Activated B cell treated with CpG ODN at 0.5 μM for 24 hours (primary cell): ENCODE measurements at regions of chr7 and their contacts with region 1.

Region 1: DNA sequence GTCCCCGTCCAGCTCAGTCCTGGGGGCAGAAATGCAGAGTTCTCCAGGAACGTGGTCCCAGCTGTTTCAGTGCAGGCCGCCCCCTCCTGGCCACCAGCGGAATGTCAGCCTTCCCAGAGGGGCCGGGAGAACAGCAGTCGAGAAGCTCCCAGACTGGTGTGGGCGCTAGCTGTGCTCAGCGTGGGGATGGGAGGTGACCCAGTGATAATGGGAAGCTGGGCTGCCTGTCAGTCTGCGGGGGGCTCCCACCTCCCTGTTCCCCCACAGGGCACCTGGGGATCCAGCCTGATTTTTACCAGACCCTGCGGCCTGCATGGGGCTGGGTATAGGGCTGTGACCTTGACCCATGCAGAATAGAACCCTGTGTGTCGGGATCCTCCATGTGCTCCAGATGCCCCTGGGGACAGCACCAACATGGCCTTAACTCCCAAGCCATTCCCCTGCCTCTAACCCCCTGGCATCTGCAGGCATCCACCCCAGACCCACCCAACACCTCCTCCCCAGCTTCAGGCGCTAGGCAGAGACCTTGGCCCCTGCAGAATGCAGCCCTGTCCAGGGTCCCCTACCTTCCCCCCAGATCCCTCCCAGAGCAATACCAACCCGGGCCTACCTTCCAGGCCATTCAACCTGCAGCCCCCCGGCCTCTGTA is 946 bp upstream of the ELN start:
- DNase-seq: peak; percentile 62
- ATAC-seq: peak; percentile 85
- H3K4me3 Mint-ChIP-seq: no peak overlapping the region
- H3K27ac Mint-ChIP-seq: no peak overlapping the region
- H3K4me1 Mint-ChIP-seq: peaks cover 8% of the 10 kb centered on the region
- H3K27me3 Mint-ChIP-seq: peaks cover 56% of the 10 kb centered on the region
- CTCF ChIP-seq: peak; percentile 76

Region 2: DNA sequence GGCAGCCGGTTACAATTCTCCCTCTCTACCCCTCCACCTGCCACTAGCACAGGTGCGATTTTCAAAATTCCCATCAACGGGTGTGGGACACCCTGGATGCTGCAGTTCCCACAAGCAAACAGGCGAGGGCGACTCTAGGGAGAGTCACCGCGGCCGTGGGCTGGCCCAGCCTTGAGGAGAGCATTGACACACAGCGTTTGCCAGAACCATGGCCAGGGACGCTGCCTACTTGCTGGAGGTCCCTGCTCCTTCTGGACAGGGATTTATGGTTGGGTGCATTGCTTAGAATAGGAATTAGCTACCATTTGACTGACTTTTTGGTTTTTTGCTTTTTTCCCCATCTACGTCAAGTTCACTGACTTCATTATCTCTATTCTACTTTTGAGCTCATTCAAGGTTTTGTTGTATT is 215.3 kb before region 1 on chr7:
- CTCF ChIA-PET with region 1: no interaction called
- POLR2A ChIA-PET with region 1: no interaction called
- intact Hi-C with region 1: loop called (anchors 5 kb)
- DNase-seq: no peak
- ATAC-seq: peak; percentile 77
- H3K4me3 Mint-ChIP-seq: no peak overlapping the region
- H3K27ac Mint-ChIP-seq: no peak overlapping the region
- H3K4me1 Mint-ChIP-seq: no peaks in the 10 kb centered on the region
- H3K27me3 Mint-ChIP-seq: peaks cover 18% of the 10 kb centered on the region
- CTCF ChIP-seq: no peak

Region 3: GRCh38 chr7:73828107-73828803 is 198.8 kb before region 1 on chr7:
- CTCF ChIA-PET with region 1: interaction called, 11 read pairs
- POLR2A ChIA-PET with region 1: no interaction called
- intact Hi-C with region 1: no loop called
- DNase-seq: no peak
- ATAC-seq: peak; percentile 50
- H3K4me3 Mint-ChIP-seq: no peak overlapping the region
- H3K27ac Mint-ChIP-seq: no peak overlapping the region
- H3K4me1 Mint-ChIP-seq: peaks cover 29% of the 10 kb centered on the region
- H3K27me3 Mint-ChIP-seq: peaks cover 1% of the 10 kb centered on the region
- CTCF ChIP-seq: no peak

Region 4: GRCh38 chr7:73978661-73979563 is 48.1 kb before region 1 on chr7:
- CTCF ChIA-PET with region 1: no interaction called
- POLR2A ChIA-PET with region 1: no interaction called
- intact Hi-C with region 1: loop called (anchors 5 kb)
- DNase-seq: no peak
- ATAC-seq: peak; percentile 57
- H3K4me3 Mint-ChIP-seq: no peak overlapping the region
- H3K27ac Mint-ChIP-seq: no peak overlapping the region
- H3K4me1 Mint-ChIP-seq: peaks cover 8% of the 10 kb centered on the region
- H3K27me3 Mint-ChIP-seq: peaks cover 4% of the 10 kb centered on the region
- CTCF ChIP-seq: no peak

Region 5: DNA sequence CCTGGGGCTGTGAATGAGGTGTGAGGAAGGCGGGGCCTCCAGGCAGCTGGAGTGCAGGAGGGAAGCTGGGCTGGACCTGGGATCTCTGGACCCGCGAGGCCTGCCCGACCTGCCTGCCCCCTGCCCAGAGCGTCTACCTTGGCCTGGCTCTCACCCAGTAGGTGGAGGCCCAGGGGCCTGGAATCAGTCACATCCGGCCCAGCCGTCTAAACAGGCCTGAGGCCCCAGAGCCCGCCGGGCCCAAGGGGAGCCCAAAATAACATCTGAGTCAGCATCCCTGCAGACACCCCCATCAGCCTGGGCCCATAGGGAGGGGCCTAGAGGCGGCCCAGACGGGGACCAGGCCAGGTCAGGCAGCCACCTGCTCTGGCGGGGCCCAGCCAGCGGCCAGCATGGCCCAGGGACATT is 14.2 kb before region 1 on chr7:
- CTCF ChIA-PET with region 1: interaction called, 17 read pairs
- POLR2A ChIA-PET with region 1: no interaction called
- intact Hi-C with region 1: no loop called
- DNase-seq: no peak
- ATAC-seq: peak; percentile 97
- H3K4me3 Mint-ChIP-seq: no peak overlapping the region
- H3K27ac Mint-ChIP-seq: no peak overlapping the region
- H3K4me1 Mint-ChIP-seq: peaks cover 3% of the 10 kb centered on the region
- H3K27me3 Mint-ChIP-seq: no peaks in the 10 kb centered on the region
- CTCF ChIP-seq: no peak

Region 6: GRCh38 chr7:74044951-74045350 is 17.9 kb after region 1 on chr7:
- CTCF ChIA-PET with region 1: no interaction called
- POLR2A ChIA-PET with region 1: no interaction called
- intact Hi-C with region 1: no loop called
- DNase-seq: no peak
- ATAC-seq: no peak
- H3K4me3 Mint-ChIP-seq: no peak overlapping the region
- H3K27ac Mint-ChIP-seq: no peak overlapping the region
- H3K4me1 Mint-ChIP-seq: no peaks in the 10 kb centered on the region
- H3K27me3 Mint-ChIP-seq: peaks cover 10% of the 10 kb centered on the region
- CTCF ChIP-seq: no peak